ENCODE measurements at regions of chr16 and their contacts with region 1.

Region 1: GRCh38 chr16:79677799-79678577 is 77.5 kb upstream of the MAF start:
- DNase-seq: no peak
- H3K4me3 Mint-ChIP-seq: no peak overlapping the region
- H3K27ac Mint-ChIP-seq: no peak overlapping the region
- H3K4me1 Mint-ChIP-seq: no peaks in the 10 kb centered on the region
- H3K27me3 Mint-ChIP-seq: peaks cover 21% of the 10 kb centered on the region

Region 2: DNA sequence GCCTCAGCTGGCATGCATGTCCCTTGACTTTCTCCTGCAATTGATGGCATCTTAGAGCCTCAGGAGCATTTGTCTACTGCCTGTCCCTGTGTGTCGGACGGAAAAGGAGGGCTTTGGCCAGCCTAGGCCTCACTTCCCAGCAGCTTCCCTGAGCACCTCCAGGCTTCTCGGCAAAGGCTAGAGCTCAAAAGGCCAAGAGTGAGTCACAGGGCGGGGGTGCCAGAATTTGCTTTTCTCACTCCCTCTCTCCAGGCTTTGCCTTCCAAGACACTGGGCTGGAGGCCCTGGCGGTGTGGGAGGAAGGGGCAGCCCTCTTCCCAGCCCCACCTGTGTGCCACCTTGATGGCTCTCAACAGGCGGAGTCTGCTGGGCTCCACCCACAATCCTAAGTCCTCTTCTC is 29.9 kb after region 1 on chr16:
- intact Hi-C with region 1: loop called (anchors 1 kb)
- DNase-seq: no peak
- H3K4me3 Mint-ChIP-seq: no peak overlapping the region
- H3K27ac Mint-ChIP-seq: no peak overlapping the region
- H3K4me1 Mint-ChIP-seq: peaks cover 12% of the 10 kb centered on the region
- H3K27me3 Mint-ChIP-seq: peaks cover 3% of the 10 kb centered on the region

Measured in activated T-helper 2 cell treated with anti-CD3 and anti-CD28 coated beads, Interferon-gamma antibody, Interleukin-2, Interleukin-4, amounts not matched to agents 10 μg/mL and 5 μg/mL and 100 μg/mL, durations not matched to agents 14 hours and 24 hours and 36 hours (primary cell).